GM18951 (cell line): ENCODE measurements at regions of chr19 and their contacts with region 1.

Region 1: GRCh38 chr19:40822161-40822560 is 23.2 kb downstream of the EGLN2 start:
- POLR2A ChIP-seq: no peak

Region 2: GRCh38 chr19:40650749-40651305 is 171.3 kb before region 1 on chr19:
- in situ Hi-C with region 1: loop called (anchors 10 kb)
- POLR2A ChIP-seq: no peak